Activated CD8-positive, alpha-beta memory T cell treated with anti-CD3 and anti-CD28 coated beads, Interleukin-2, amount 10 ng/mL, durations not matched to agents 7 days and 5 days (primary cell): ENCODE measurements at regions of chr4 and their contacts with region 1.

Region 1: DNA sequence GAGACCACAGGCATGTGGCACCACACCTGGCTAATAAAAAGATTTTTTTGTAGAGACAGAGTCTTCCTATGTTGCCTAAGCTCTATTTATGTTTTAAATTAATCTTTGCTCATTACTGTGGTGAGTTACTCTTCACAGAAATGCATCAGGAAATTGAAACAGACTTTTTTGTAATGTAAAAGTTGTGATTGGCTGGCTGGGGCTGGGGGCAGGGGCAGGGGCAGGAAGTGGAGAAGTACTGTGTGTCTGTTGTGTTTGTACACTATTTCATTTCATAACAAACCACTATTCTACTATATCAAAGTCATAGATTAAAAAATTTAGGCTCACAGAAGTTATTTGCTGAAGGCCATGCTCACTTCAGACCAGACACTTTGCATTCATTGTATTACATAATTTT is 19.1 kb upstream of the ABRAXAS1 start:
- DNase-seq: peak; percentile 48
- ATAC-seq: no peak
- H3K4me3 Mint-ChIP-seq: no peak overlapping the region
- H3K27ac Mint-ChIP-seq: peak overlapping the region; percentile 6
- H3K4me1 Mint-ChIP-seq: peaks cover 11% of the 10 kb centered on the region
- H3K27me3 Mint-ChIP-seq: no peaks in the 10 kb centered on the region

Region 2: DNA sequence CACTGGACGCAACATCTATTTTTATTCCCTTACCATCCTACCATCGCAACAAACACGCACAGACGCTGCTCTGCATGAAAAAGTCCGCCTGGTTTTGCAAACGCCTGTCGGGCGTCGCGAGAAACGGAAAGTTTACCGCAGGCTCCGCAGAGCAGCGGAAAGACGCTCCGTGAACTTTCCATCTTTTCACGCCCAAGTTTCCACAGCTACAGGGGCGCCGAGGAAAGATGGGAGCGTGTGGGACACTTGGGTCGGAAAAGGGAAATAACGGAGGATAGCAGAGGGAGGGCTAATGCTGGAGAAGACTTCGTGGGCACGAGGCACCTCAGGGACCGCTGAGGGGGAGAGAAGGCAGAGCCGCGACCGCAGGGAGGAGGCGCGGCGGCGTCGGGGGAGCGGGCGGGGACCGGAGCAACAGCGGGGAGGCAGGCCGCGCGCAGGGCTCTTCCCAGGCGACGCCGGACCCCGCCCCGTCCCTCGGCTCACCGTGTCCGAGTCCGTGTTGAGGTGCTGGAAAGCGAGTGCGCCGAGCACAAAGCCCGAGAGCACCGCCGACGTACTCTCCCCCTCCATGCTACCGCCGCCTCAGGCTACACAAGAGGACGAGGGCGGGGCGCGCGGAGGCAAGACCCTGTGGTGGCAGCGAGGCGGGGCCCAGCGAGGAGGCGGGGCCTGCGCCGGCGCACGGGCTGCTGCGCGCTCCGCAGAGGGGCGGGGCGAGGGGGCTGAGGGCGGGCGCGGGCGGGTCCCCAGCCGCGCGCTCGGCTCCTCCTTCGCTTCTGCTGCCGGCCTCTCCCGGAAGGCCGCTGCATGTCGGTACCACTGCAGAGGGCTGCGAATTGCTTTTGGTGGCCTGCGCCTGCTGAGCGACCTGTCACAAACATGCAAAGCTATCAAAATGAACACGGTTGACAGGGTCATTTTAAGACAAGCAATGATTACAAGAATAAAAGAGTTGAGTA is 19.2 kb before region 1 on chr4 and contains the start of gene ABRAXAS1:
- CTCF ChIA-PET with region 1: interaction called, 11 read pairs
- DNase-seq: peak; percentile 94
- ATAC-seq: peak; percentile 96
- H3K4me3 Mint-ChIP-seq: peak within 1 kb of the TSS; percentile 94
- H3K27ac Mint-ChIP-seq: peak within 1 kb of the TSS; percentile 93
- H3K4me1 Mint-ChIP-seq: peaks cover 15% of the 10 kb centered on the region
- H3K27me3 Mint-ChIP-seq: no peaks in the 10 kb centered on the region
- total RNA-seq, gene ABRAXAS1: 11.3 to 11.5 TPM

Region 3: GRCh38 chr4:83522239-83522638 is 18.3 kb after region 1 on chr4:
- CTCF ChIA-PET with region 1: interaction called, 10 read pairs
- DNase-seq: no peak
- ATAC-seq: no peak
- H3K4me3 Mint-ChIP-seq: no peak overlapping the region
- H3K27ac Mint-ChIP-seq: no peak overlapping the region
- H3K4me1 Mint-ChIP-seq: no peaks in the 10 kb centered on the region
- H3K27me3 Mint-ChIP-seq: peaks cover 17% of the 10 kb centered on the region